ENCODE measurements at regions of chr19 and their contacts with region 1.

Region 1: GRCh38 chr19:35693830-35694599 is 10.3 kb upstream of the ZBTB32 start:
- DNase-seq: peak; percentile 79
- ATAC-seq: peak; percentile 95
- H3K4me3 ChIP-seq: no peak overlapping the region
- H3K27ac ChIP-seq: peak overlapping the region; percentile 43; the same call in 1 of the 2 replicates
- H3K4me1 ChIP-seq: peaks cover 18% of the 10 kb centered on the region
- H3K27me3 ChIP-seq: no peaks in the 10 kb centered on the region
- CTCF ChIP-seq: peak; percentile 99
- EP300 ChIP-seq: no peak
- POLR2A ChIP-seq: no peak
- RAD21 ChIP-seq: peak; percentile 99

Region 2: DNA sequence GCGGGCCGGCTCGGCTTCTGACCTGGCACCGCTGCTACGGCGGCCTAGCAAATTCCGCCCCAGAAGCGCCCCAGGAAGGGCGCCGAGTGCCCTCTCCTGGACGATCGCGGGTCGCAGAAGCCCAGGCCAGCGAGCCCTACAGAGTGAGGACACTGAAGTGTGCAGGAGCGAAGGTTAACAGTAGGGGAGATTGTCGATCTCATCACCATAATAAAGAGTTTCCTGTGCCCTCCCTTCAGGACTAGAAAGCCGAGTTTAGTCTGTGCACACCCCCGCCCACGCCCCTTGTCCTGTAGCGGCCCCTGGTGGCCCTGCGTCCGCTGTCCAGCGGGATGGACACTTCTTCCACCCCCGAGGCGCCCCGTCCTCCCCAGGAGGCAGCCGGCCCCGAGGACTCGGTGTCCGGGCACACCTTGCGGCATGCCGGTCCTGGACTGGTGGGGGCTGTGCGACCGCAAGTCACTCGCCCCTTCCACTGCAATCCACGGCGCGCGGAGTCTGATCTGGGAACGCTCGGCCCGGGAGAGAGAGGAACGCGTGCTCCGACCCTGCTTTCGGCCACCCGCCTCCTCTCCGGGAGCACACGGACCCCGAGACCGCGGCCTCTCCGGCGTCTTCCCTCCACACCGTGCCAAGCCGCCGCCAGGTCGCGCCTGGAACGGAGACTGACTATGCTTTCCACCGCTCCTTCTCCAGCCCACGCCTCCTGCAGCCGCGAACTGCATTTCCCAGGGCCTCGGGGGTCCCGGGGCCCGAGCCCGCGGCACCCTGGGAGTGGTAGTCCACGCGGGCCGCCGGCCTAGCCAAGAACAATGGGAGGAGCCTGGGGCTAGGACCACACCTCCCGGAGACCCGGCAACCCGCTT is 23.0 kb after region 1 on chr19:
- CTCF ChIA-PET with region 1: interaction called, 271 read pairs
- POLR2A ChIA-PET with region 1: interaction called, 516 read pairs
- RAD21 ChIA-PET with region 1: interaction called, 430 read pairs
- SMC1A ChIA-PET with region 1: interaction called, 375 read pairs
- in situ Hi-C with region 1: no loop called
- intact Hi-C with region 1: loop called (anchors 1 kb)
- DNase-seq: peak; percentile 77
- ATAC-seq: peak; percentile 75
- H3K4me3 ChIP-seq: peak overlapping the region; percentile 82
- H3K27ac ChIP-seq: peak overlapping the region; percentile 95
- H3K4me1 ChIP-seq: peaks cover 32% of the 10 kb centered on the region
- H3K27me3 ChIP-seq: no peaks in the 10 kb centered on the region
- CTCF ChIP-seq: peak; percentile 53 to 76 (median 74)
- EP300 ChIP-seq: no peak
- POLR2A ChIP-seq: peak; percentile 77
- RAD21 ChIP-seq: peak; percentile 52

Region 3: GRCh38 chr19:35748106-35749020 is 54.3 kb after region 1 on chr19 and contains the start of gene LIN37:
- CTCF ChIA-PET with region 1: interaction called, 19 read pairs
- POLR2A ChIA-PET with region 1: interaction called, 11 read pairs
- RAD21 ChIA-PET with region 1: interaction called, 16 read pairs
- SMC1A ChIA-PET with region 1: interaction called, 14 read pairs
- in situ Hi-C with region 1: no loop called
- intact Hi-C with region 1: no loop called
- DNase-seq: peak; percentile 99
- ATAC-seq: peak; percentile 85
- H3K4me3 ChIP-seq: peak within 1 kb of the TSS; percentile 81
- H3K27ac ChIP-seq: peak within 1 kb of the TSS; percentile 59
- H3K4me1 ChIP-seq: peaks cover 19% of the 10 kb centered on the region
- H3K27me3 ChIP-seq: no peaks in the 10 kb centered on the region
- CTCF ChIP-seq: no peak
- EP300 ChIP-seq: no peak
- POLR2A ChIP-seq: peak; percentile 55
- RAD21 ChIP-seq: no peak
- polyA plus RNA-seq, gene LIN37: 0.69 to 3.3 TPM

Region 4: DNA sequence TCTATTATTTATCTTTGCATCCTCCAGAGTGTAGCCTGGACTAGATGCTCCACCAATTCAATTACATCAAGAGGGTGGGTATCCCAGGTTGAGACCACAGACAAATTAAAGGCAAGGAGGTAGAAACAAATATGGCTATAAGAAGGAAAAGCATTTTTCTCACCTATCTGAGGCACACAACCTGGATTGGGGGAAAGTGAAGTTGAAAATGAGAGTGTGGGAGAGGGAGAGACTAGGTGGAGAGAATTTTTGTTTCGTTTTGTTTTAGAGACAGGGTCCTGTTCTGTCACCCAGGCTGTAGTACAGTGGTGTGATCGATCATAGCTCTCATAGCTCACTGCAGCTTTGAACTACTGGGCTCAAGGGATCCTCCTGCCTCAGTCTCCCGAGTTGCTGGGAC is 124.4 kb after region 1 on chr19:
- CTCF ChIA-PET with region 1: interaction called, 9 read pairs
- POLR2A ChIA-PET with region 1: no interaction called
- RAD21 ChIA-PET with region 1: interaction called, 6 read pairs
- SMC1A ChIA-PET with region 1: interaction called, 6 read pairs
- in situ Hi-C with region 1: no loop called
- intact Hi-C with region 1: loop called (anchors 2 kb)
- DNase-seq: no peak
- ATAC-seq: no peak
- H3K4me3 ChIP-seq: no peak overlapping the region
- H3K27ac ChIP-seq: no peak overlapping the region
- H3K4me1 ChIP-seq: no peaks in the 10 kb centered on the region
- H3K27me3 ChIP-seq: 0 out of 4 replicates have a peak, but pooled peaks cover 0 to 3% of the 10 kb centered on the region in 2 experiments
- CTCF ChIP-seq: no peak
- EP300 ChIP-seq: no peak
- POLR2A ChIP-seq: no peak
- RAD21 ChIP-seq: no peak